ENCODE measurements at regions of chr2 and their contacts with region 1.

Region 1: GRCh38 chr2:200713003-200713703 is 98.6 kb upstream of the BZW1 start:
- DNase-seq: peak; percentile 96
- H3K4me3 Mint-ChIP-seq: peak overlapping the region; percentile 72
- H3K27ac Mint-ChIP-seq: peak overlapping the region; percentile 100
- H3K4me1 Mint-ChIP-seq: peaks cover 13% of the 10 kb centered on the region
- H3K27me3 Mint-ChIP-seq: peaks cover 2% of the 10 kb centered on the region

Region 2: GRCh38 chr2:200297989-200298388 is 415.2 kb before region 1 on chr2:
- CTCF ChIA-PET with region 1: no interaction called
- POLR2A ChIA-PET with region 1: no interaction called
- DNase-seq: no peak
- H3K4me3 Mint-ChIP-seq: no peak overlapping the region
- H3K27ac Mint-ChIP-seq: no peak overlapping the region
- H3K4me1 Mint-ChIP-seq: peaks cover 11% of the 10 kb centered on the region
- H3K27me3 Mint-ChIP-seq: peaks cover 27% of the 10 kb centered on the region

Region 3: DNA sequence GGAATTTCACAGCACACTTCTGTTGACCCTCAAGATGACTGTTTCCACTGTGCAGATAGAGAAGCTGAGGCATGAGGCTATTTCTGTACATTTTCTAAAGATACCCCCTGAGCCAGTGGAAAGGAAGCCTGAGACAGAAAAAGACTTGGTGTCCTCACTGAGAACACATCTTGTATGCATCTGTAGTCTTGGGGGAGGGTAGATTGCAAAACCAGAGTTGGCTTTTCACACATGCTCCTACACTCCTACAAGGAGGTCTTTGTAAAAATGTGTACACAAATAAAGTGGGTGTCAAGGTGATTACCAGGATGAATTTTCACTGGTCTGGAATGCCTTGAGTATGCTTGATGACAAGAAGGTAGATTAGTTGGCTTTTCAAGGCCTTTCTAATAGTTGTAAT is 301.3 kb before region 1 on chr2:
- CTCF ChIA-PET with region 1: no interaction called
- POLR2A ChIA-PET with region 1: no interaction called
- DNase-seq: no peak
- H3K4me3 Mint-ChIP-seq: no peak overlapping the region
- H3K27ac Mint-ChIP-seq: no peak overlapping the region
- H3K4me1 Mint-ChIP-seq: peaks cover 28% of the 10 kb centered on the region
- H3K27me3 Mint-ChIP-seq: no peaks in the 10 kb centered on the region

Region 4: DNA sequence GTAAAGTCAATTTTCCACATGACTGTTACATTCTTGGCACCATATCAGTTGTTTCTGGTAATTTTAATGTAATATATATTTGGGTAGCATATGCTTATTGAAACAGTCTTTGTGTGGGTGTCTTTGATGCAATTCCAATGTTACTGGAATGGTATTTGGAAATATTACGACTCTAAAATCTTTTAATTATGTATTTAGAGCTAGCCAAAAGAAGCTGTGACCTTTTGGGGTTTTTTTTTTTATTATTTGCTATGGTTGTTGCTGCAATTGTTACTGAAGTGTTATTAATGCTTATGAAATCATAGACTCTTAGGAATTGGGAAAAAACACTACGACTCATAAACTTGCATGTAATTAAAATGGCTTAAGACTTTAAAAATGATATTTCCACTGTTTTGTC is 31.5 kb before region 1 on chr2:
- CTCF ChIA-PET with region 1: no interaction called
- POLR2A ChIA-PET with region 1: no interaction called
- DNase-seq: no peak
- H3K4me3 Mint-ChIP-seq: no peak overlapping the region
- H3K27ac Mint-ChIP-seq: no peak overlapping the region
- H3K4me1 Mint-ChIP-seq: no peaks in the 10 kb centered on the region
- H3K27me3 Mint-ChIP-seq: peaks cover 9% of the 10 kb centered on the region

Region 5: DNA sequence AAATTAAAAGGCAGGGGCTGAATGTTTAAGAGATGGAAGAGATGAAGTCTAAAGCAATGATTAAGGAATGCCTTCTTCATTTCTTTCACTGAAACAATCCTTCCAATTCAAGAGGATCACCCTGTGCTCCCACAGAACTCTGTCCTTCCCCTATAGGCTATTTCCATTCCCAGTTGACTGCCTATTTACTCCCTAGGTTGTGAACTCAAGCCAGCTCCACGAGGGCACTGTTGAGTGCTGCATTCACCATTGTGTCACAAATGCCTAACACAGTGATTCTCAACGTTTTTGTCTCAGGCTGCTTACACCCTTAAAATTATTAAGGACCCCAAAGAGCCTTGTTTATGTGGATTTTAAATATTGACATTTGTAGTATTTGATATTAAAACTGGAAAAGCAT is 14.9 kb before region 1 on chr2:
- CTCF ChIA-PET with region 1: interaction called, 17 read pairs
- POLR2A ChIA-PET with region 1: no interaction called
- DNase-seq: no peak
- H3K4me3 Mint-ChIP-seq: no peak overlapping the region
- H3K27ac Mint-ChIP-seq: no peak overlapping the region
- H3K4me1 Mint-ChIP-seq: peaks cover 12% of the 10 kb centered on the region
- H3K27me3 Mint-ChIP-seq: peaks cover 2% of the 10 kb centered on the region

Region 6: GRCh38 chr2:200728630-200729029 is 15.5 kb after region 1 on chr2:
- CTCF ChIA-PET with region 1: interaction called, 27 read pairs
- POLR2A ChIA-PET with region 1: no interaction called
- DNase-seq: no peak
- H3K4me3 Mint-ChIP-seq: no peak overlapping the region
- H3K27ac Mint-ChIP-seq: no peak overlapping the region
- H3K4me1 Mint-ChIP-seq: peaks cover 11% of the 10 kb centered on the region
- H3K27me3 Mint-ChIP-seq: peaks cover 18% of the 10 kb centered on the region

Region 7: GRCh38 chr2:200735061-200735460 is 21.9 kb after region 1 on chr2:
- CTCF ChIA-PET with region 1: interaction called, 15 read pairs
- POLR2A ChIA-PET with region 1: no interaction called
- DNase-seq: no peak
- H3K4me3 Mint-ChIP-seq: no peak overlapping the region
- H3K27ac Mint-ChIP-seq: no peak overlapping the region
- H3K4me1 Mint-ChIP-seq: peaks cover 6% of the 10 kb centered on the region
- H3K27me3 Mint-ChIP-seq: peaks cover 12% of the 10 kb centered on the region

Region 8: GRCh38 chr2:200864176-200864976 is 151.2 kb after region 1 on chr2 and contains the start of gene CLK1:
- CTCF ChIA-PET with region 1: interaction called, 11 read pairs
- POLR2A ChIA-PET with region 1: no interaction called
- DNase-seq: peak; percentile 98
- H3K4me3 Mint-ChIP-seq: peak within 1 kb of the TSS; percentile 90
- H3K27ac Mint-ChIP-seq: peak within 1 kb of the TSS; percentile 100
- H3K4me1 Mint-ChIP-seq: peaks cover 46% of the 10 kb centered on the region
- H3K27me3 Mint-ChIP-seq: no peaks in the 10 kb centered on the region
- total RNA-seq, gene CLK1: 120 to 142 TPM

Measured in activated CD4-positive, alpha-beta T cell treated with anti-CD3 and anti-CD28 coated beads, Interleukin-2, amount 10 ng/mL, durations not matched to agents 7 days and 5 days (primary cell).